ENCODE measurements at regions of chr3 and their contacts with region 1.

Region 1: GRCh38 chr3:152385761-152386160 is 117.0 kb downstream of the MBNL1 start:
- DNase-seq: peak; percentile 35
- ATAC-seq: no peak
- H3K4me3 ChIP-seq: no peak overlapping the region
- H3K27ac ChIP-seq: no peak overlapping the region
- H3K4me1 ChIP-seq: peaks cover 38% of the 10 kb centered on the region
- H3K27me3 ChIP-seq: no peaks in the 10 kb centered on the region
- CTCF ChIP-seq: no peak

Region 2: GRCh38 chr3:152438181-152438580 is 52.4 kb after region 1 on chr3:
- CTCF ChIA-PET with region 1: no interaction called
- POLR2A ChIA-PET with region 1: no interaction called
- intact Hi-C with region 1: loop called (anchors 2 kb)
- DNase-seq: peak; percentile 43
- ATAC-seq: peak; percentile 71
- H3K4me3 ChIP-seq: no peak overlapping the region
- H3K27ac ChIP-seq: peak overlapping the region; percentile 3; the same call in 1 of the 2 replicates
- H3K4me1 ChIP-seq: peaks cover 11% of the 10 kb centered on the region
- H3K27me3 ChIP-seq: no peaks in the 10 kb centered on the region
- CTCF ChIP-seq: no peak

Measured in PC-3 (cell line).